ENCODE measurements at regions of chr5 and their contacts with region 1.

Region 1: GRCh38 chr5:50501491-50502228 is 60.6 kb upstream of the EMB start:
- H3K4me3 Mint-ChIP-seq: no peak overlapping the region
- H3K27ac Mint-ChIP-seq: peak overlapping the region; percentile 43
- H3K4me1 Mint-ChIP-seq: peaks cover 10% of the 10 kb centered on the region
- H3K27me3 Mint-ChIP-seq: no peaks in the 10 kb centered on the region

Region 2: DNA sequence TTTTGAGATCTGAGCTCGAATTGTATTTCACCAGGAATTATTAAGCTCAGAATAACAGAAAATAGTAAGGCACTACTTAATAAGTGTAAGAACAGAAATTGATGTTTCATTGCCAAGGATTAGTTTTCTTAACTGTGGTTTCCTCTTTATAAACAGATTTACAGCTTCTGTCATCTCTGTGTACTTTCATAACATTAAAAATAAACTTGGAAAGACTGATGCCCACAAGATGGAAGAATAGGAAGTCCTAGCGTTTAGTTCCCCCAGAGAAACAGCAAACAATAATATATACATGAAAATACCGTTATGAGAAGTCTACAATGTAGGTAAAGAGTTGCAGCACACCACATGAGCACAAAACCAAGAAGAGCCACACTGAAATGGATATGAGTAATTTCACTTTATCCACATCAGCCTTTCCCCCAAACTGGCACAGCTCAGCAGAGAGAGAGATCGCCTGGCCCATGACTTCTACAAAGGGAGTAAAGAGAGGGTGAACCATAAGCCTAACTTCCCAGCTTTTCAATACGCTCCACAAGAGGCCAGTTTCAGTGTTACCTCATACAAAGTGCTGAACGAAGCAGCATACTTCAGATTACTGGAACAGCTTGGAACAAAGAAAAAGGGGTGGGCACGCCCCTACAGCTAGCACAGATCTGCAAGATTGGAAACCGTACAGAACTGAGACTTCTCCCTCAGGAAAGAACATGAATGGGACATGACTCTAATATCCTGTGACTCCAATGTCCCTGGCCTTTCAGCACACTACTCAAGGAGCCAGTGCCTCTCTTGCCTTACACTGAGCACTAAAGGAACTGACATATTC is 136.0 kb before region 1 on chr5:
- intact Hi-C with region 1: no loop called
- H3K4me3 Mint-ChIP-seq: no peak overlapping the region
- H3K27ac Mint-ChIP-seq: peak overlapping the region; percentile 76
- H3K4me1 Mint-ChIP-seq: peaks cover 17% of the 10 kb centered on the region
- H3K27me3 Mint-ChIP-seq: no peaks in the 10 kb centered on the region

Region 3: GRCh38 chr5:50415912-50416311 is 85.7 kb before region 1 on chr5:
- intact Hi-C with region 1: no loop called
- H3K4me3 Mint-ChIP-seq: no peak overlapping the region
- H3K27ac Mint-ChIP-seq: no peak overlapping the region
- H3K4me1 Mint-ChIP-seq: peaks cover 50% of the 10 kb centered on the region
- H3K27me3 Mint-ChIP-seq: no peaks in the 10 kb centered on the region

Region 4: GRCh38 chr5:50440651-50441492 is 60.8 kb before region 1 on chr5 and contains the start of gene EMB:
- intact Hi-C with region 1: loop called (anchors 2 kb)
- H3K4me3 Mint-ChIP-seq: peak within 1 kb of the TSS; percentile 87
- H3K27ac Mint-ChIP-seq: peak within 1 kb of the TSS; percentile 91
- H3K4me1 Mint-ChIP-seq: peaks cover 50% of the 10 kb centered on the region
- H3K27me3 Mint-ChIP-seq: no peaks in the 10 kb centered on the region

Region 5: DNA sequence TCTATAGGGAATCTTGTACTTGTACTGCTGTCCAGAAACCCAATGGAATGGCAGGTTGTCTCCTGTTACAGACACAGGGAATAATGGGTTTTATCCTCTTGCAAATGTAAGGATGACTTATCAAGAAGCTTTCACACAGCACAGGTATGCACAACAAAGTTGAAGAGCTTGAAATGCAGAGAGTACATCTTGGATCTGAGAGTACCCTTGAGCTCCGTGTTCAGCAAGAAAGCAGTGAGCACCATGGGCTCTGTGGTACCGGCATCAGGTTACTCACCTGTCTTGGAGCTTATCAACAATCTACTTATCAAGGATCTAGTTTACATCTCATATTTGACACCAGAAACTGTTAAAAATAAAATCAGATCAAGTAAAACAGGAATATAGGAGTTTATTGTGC is 38.6 kb before region 1 on chr5:
- intact Hi-C with region 1: no loop called
- H3K4me3 Mint-ChIP-seq: no peak overlapping the region
- H3K27ac Mint-ChIP-seq: no peak overlapping the region
- H3K4me1 Mint-ChIP-seq: peaks cover 10% of the 10 kb centered on the region
- H3K27me3 Mint-ChIP-seq: no peaks in the 10 kb centered on the region

Region 6: GRCh38 chr5:50553560-50553984 is 51.9 kb after region 1 on chr5:
- intact Hi-C with region 1: no loop called
- H3K4me3 Mint-ChIP-seq: no peak overlapping the region
- H3K27ac Mint-ChIP-seq: no peak overlapping the region
- H3K4me1 Mint-ChIP-seq: no peaks in the 10 kb centered on the region
- H3K27me3 Mint-ChIP-seq: no peaks in the 10 kb centered on the region